ENCODE measurements at regions of chr12 and their contacts with region 1.

Region 1: GRCh38 chr12:2853626-2854025 is 3.2 kb downstream of the TEX52 start:
- DNase-seq: peak; percentile 84
- H3K4me3 Mint-ChIP-seq: no peak overlapping the region
- H3K27ac Mint-ChIP-seq: no peak overlapping the region
- H3K4me1 Mint-ChIP-seq: peaks cover 3% of the 10 kb centered on the region
- H3K27me3 Mint-ChIP-seq: no peaks in the 10 kb centered on the region

Region 2: GRCh38 chr12:2804393-2805142 is 49.1 kb before region 1 on chr12:
- intact Hi-C with region 1: no loop called
- DNase-seq: no peak
- H3K4me3 Mint-ChIP-seq: no peak overlapping the region
- H3K27ac Mint-ChIP-seq: peak overlapping the region; percentile 3
- H3K4me1 Mint-ChIP-seq: peaks cover 4% of the 10 kb centered on the region
- H3K27me3 Mint-ChIP-seq: no peaks in the 10 kb centered on the region

Region 3: GRCh38 chr12:2833810-2834209 is 19.8 kb before region 1 on chr12:
- intact Hi-C with region 1: no loop called
- DNase-seq: no peak
- H3K4me3 Mint-ChIP-seq: no peak overlapping the region
- H3K27ac Mint-ChIP-seq: no peak overlapping the region
- H3K4me1 Mint-ChIP-seq: peaks cover 4% of the 10 kb centered on the region
- H3K27me3 Mint-ChIP-seq: no peaks in the 10 kb centered on the region

Region 4: GRCh38 chr12:2891240-2892053 is 37.8 kb after region 1 on chr12:
- intact Hi-C with region 1: no loop called
- DNase-seq: peak; percentile 78
- H3K4me3 Mint-ChIP-seq: peak overlapping the region; percentile 99
- H3K27ac Mint-ChIP-seq: no peak overlapping the region
- H3K4me1 Mint-ChIP-seq: peaks cover 32% of the 10 kb centered on the region
- H3K27me3 Mint-ChIP-seq: peaks cover 3% of the 10 kb centered on the region

Region 5: DNA sequence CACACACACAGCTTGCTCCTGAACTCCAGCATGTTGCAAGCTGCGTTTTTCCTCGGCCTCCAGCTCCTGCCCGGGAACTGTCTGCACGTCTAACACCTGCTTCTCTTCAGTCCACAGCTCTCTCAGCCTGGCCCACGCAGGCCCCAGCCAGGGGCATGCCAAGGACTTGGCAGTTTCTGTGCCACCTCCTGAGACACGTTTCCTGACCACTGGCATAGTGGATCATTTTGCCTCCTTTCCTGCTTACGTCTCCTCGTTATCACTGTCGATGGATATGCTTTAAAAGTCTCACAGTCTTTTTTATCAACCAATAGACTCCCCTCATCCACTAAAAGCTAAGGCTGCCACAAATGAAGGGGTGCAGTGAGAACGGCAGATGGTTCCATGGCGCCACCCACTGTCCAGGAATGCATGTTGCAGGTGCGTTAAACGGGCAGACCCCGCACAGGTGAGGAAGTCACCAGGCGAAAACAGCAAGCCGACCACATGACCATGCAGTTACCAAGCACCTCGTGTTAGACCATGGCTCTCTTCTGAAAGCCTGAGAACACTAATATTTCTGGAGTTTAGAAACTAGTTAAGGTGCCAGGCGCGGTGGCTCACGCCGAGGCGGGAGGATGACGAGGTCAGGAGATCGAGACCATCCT is 90.9 kb after region 1 on chr12:
- intact Hi-C with region 1: loop called (anchors 1 kb)
- DNase-seq: peak; percentile 88
- H3K4me3 Mint-ChIP-seq: peak overlapping the region; percentile 23
- H3K27ac Mint-ChIP-seq: no peak overlapping the region
- H3K4me1 Mint-ChIP-seq: peaks cover 4% of the 10 kb centered on the region
- H3K27me3 Mint-ChIP-seq: peaks cover 5% of the 10 kb centered on the region

Region 6: DNA sequence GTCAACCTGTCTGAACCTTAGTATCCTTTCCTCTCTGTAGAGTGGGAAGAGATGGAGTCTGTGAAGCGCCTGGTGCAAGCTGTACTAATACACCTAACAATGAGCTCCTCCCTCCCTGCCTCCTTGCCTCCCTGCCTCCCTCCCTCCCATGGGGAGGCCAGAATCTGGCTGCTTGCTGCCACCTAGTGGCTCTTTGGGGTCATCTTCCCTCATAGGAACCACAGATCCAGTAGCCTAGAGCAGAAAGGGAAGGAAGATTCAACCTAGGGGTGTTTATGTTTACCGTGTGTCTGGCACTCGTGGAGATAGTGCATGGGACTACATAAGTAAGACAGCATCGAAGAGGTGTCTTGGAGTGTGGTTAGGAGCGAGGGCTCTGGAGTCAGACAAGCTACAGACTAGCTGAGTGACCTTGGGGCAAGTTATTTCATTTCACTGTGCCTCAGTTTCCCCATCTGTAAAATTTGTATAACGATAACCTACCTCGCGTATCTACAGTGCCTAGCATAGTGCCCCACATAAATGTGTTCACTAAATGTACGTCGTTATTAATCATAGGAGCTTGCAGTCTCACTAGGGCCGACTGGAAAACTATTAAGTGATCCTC is 188.0 kb after region 1 on chr12:
- intact Hi-C with region 1: loop called (anchors 5 kb)
- DNase-seq: peak; percentile 88
- H3K4me3 Mint-ChIP-seq: no peak overlapping the region
- H3K27ac Mint-ChIP-seq: no peak overlapping the region
- H3K4me1 Mint-ChIP-seq: no peaks in the 10 kb centered on the region
- H3K27me3 Mint-ChIP-seq: peaks cover 9% of the 10 kb centered on the region

Measured in activated CD4-positive, alpha-beta T cell treated with anti-CD3 and anti-CD28 coated beads, Interleukin-2, amount 10 ng/mL, durations not matched to agents 24 days and 14 days (primary cell).